ENCODE measurements at regions of chr14 and their contacts with region 1.

Region 1: GRCh38 chr14:55270832-55271565 is at the start of gene FBXO34:
- DNase-seq: peak; percentile 96 to 100 (median 100)
- ATAC-seq: peak; percentile 91
- H3K4me3 ChIP-seq: peak within 1 kb of the TSS; percentile 98
- H3K4me3 Mint-ChIP-seq: peak within 1 kb of the TSS; percentile 97
- H3K27ac ChIP-seq: peak within 1 kb of the TSS; percentile 55 to 61
- H3K27ac Mint-ChIP-seq: peak within 1 kb of the TSS; percentile 94
- H3K4me1 ChIP-seq: peaks cover 9% of the 10 kb centered on the region
- H3K4me1 Mint-ChIP-seq: peaks cover 47% of the 10 kb centered on the region
- H3K27me3 ChIP-seq: no peaks in the 10 kb centered on the region
- H3K27me3 Mint-ChIP-seq: no peaks in the 10 kb centered on the region
- CTCF ChIP-seq: peak; percentile 97
- total RNA-seq, gene FBXO34: 28.3 to 29.7 TPM

Region 2: GRCh38 chr14:54509546-54510501 is 761.2 kb before region 1 on chr14 and contains the start of gene CGRRF1:
- CTCF ChIA-PET with region 1: no interaction called
- POLR2A ChIA-PET with region 1: no interaction called
- intact Hi-C with region 1: loop called in 1 of 2 experiments (anchors 5 kb)
- DNase-seq: peak; percentile 87 to 97 (median 94)
- ATAC-seq: peak; percentile 95
- H3K4me3 ChIP-seq: peak within 1 kb of the TSS; percentile 79
- H3K4me3 Mint-ChIP-seq: peak within 1 kb of the TSS; percentile 96
- H3K27ac ChIP-seq: peak within 1 kb of the TSS; percentile 6 to 59
- H3K27ac Mint-ChIP-seq: peak within 1 kb of the TSS; percentile 78
- H3K4me1 ChIP-seq: peaks cover 31% of the 10 kb centered on the region
- H3K4me1 Mint-ChIP-seq: peaks cover 59% of the 10 kb centered on the region
- H3K27me3 ChIP-seq: no peaks in the 10 kb centered on the region
- H3K27me3 Mint-ChIP-seq: peaks cover 4% of the 10 kb centered on the region
- CTCF ChIP-seq: peak; percentile 64
- total RNA-seq, gene CGRRF1: 34.5 to 42.8 TPM

Region 3: GRCh38 chr14:55333711-55334485 is 62.9 kb after region 1 on chr14:
- CTCF ChIA-PET with region 1: interaction called, 15 read pairs
- POLR2A ChIA-PET with region 1: interaction called, 21 read pairs
- intact Hi-C with region 1: loop called in 1 of 2 experiments (anchors 2 kb)
- DNase-seq: peak in 4 of 14 experiments; percentile 20 to 81 (median 42)
- ATAC-seq: peak; percentile 16
- H3K4me3 ChIP-seq: peak overlapping the region; percentile 50
- H3K4me3 Mint-ChIP-seq: peak overlapping the region; percentile 85
- H3K27ac ChIP-seq: peak overlapping the region; percentile 46 to 53
- H3K27ac Mint-ChIP-seq: peak overlapping the region; percentile 79
- H3K4me1 ChIP-seq: peaks cover 44% of the 10 kb centered on the region
- H3K4me1 Mint-ChIP-seq: peaks cover 84% of the 10 kb centered on the region
- H3K27me3 ChIP-seq: no peaks in the 10 kb centered on the region
- H3K27me3 Mint-ChIP-seq: no peaks in the 10 kb centered on the region
- CTCF ChIP-seq: no peak

Region 4: DNA sequence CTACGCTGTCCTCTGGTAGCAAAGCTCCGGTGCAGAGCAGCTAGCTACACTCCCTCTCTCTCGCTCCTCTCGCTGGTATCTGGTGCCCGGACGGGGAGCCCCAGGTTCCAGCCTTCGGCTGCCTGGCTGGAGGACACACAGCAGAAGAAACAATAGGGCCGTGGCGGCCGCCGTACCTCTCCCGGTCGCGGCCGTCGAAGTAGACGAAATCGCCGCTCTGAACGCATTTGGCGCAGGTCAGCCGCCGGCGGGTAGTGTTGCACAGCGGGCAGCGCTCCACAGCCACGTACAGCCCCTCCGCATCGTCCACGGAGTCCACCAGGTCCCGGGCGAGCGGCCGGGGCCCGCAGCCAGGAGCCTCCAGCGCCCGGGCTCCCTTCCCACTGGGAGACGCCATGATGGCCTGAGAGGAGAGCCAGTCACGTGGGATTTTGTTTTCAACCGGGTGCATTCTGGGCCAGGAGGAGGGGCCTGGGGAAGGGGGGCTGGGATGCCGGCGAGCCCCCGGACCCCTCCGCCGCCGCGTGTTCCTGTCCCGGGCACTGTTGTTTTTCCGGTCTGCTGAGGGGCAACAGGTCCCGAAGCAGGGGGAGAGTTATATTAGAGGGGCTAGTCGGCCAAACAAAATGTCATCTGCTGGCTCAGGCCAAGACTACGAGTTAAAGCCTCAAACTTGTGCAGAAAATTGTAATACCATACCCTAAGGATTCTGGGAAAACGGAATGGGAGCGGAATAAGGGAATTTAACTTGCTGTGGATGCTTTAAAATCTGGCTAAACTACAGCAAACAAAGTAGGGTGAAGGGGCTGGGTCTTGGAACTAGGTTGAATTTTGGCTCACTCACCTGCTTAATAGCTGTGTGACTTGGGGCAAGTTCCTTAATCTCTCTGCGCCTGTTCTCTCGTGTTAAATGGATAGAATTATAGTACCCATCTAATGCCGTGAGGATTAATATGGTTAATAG is 140.7 kb after region 1 on chr14 and contains the start of gene ATG14:
- CTCF ChIA-PET with region 1: interaction called, 3 read pairs
- POLR2A ChIA-PET with region 1: interaction called, 4 read pairs
- intact Hi-C with region 1: loop called in 1 of 2 experiments (anchors 5 kb)
- DNase-seq: peak; percentile 51 to 85 (median 66)
- ATAC-seq: peak; percentile 98
- H3K4me3 ChIP-seq: peak within 1 kb of the TSS; percentile 92
- H3K4me3 Mint-ChIP-seq: peak within 1 kb of the TSS; percentile 85
- H3K27ac ChIP-seq: peak within 1 kb of the TSS; percentile 49 to 61
- H3K27ac Mint-ChIP-seq: peak within 1 kb of the TSS; percentile 69
- H3K4me1 ChIP-seq: peaks cover 9% of the 10 kb centered on the region
- H3K4me1 Mint-ChIP-seq: peaks cover 50% of the 10 kb centered on the region
- H3K27me3 ChIP-seq: no peaks in the 10 kb centered on the region
- H3K27me3 Mint-ChIP-seq: no peaks in the 10 kb centered on the region
- CTCF ChIP-seq: no peak
- total RNA-seq, gene ATG14: 19.9 to 20.5 TPM